ENCODE measurements at regions of chr16 and their contacts with region 1.

Region 1: DNA sequence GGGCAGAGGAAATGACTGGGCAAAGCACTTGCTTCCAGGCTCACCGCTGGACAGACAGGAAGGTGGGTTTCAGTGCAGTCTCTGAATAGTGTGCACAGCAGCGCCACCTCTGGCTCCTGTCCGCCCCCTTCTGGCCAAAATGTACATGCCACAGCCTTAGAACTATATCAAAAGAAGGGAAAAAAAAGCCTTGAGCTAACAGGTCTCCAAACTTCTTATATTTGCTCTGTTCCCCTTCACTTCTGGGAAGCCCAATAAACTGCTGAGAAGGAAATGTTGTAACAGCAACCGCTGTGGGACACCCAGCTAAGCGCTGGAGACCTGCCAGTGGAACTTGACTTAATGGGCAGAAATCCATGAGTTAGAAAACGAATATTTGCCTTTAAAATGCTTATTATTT is 17.5 kb downstream of the COG7 start:
- DNase-seq: peak; percentile 63
- H3K4me3 ChIP-seq: no peak overlapping the region
- H3K27ac ChIP-seq: peak overlapping the region; percentile 2 to 20
- H3K4me1 ChIP-seq: peaks cover 7% of the 10 kb centered on the region
- H3K27me3 ChIP-seq: no peaks in the 10 kb centered on the region
- CTCF ChIP-seq: peak; percentile 44 to 88 (median 78)
- POLR2A ChIP-seq: no peak

Region 2: GRCh38 chr16:23182460-23183309 is 252.8 kb before region 1 on chr16 and contains the start of gene SCNN1G:
- intact Hi-C with region 1: loop called (anchors 1 kb)
- DNase-seq: peak; percentile 90
- H3K4me3 ChIP-seq: peak within 1 kb of the TSS; percentile 41 to 43
- H3K27ac ChIP-seq: peak within 1 kb of the TSS; percentile 10 to 36
- H3K4me1 ChIP-seq: no peaks in the 10 kb centered on the region
- H3K27me3 ChIP-seq: no peaks in the 10 kb centered on the region
- CTCF ChIP-seq: peak; percentile 98 to 100 (median 100)
- POLR2A ChIP-seq: peak; percentile 81
- total RNA-seq, gene SCNN1G: 8.6 to 11.1 TPM

Measured in prostate gland (tissue), 2 donors.